ENCODE measurements at regions of chr5 and their contacts with region 1.

Region 1: GRCh38 chr5:82225525-82226172 is 52.5 kb downstream of the RPS23 start:
- DNase-seq: peak; percentile 39 to 81
- ATAC-seq: peak; percentile 71 to 90 (median 90)
- H3K4me3 ChIP-seq: no peak overlapping the region
- H3K4me3 Mint-ChIP-seq: no peak overlapping the region
- H3K27ac ChIP-seq: no peak overlapping the region
- H3K27ac Mint-ChIP-seq: no peak overlapping the region
- H3K4me1 ChIP-seq: peaks cover 4% of the 10 kb centered on the region
- H3K4me1 Mint-ChIP-seq: peaks cover 5 to 10% of the 10 kb centered on the region in 2 donors
- H3K27me3 ChIP-seq: no peaks in the 10 kb centered on the region
- H3K27me3 Mint-ChIP-seq: no peaks in the 10 kb centered on the region
- CTCF ChIP-seq: peak; percentile 89

Region 2: GRCh38 chr5:82174128-82174918 is 51.3 kb before region 1 on chr5:
- intact Hi-C with region 1: loop called (anchors 1 kb)
- DNase-seq: peak; percentile 44 to 67
- ATAC-seq: peak; percentile 58 to 87 (median 86)
- H3K4me3 ChIP-seq: no peak overlapping the region
- H3K4me3 Mint-ChIP-seq: no peak overlapping the region
- H3K27ac ChIP-seq: no peak overlapping the region
- H3K27ac Mint-ChIP-seq: peak overlapping the region in 1 of 2 donors; percentile 75
- H3K4me1 ChIP-seq: peaks cover 2% of the 10 kb centered on the region
- H3K4me1 Mint-ChIP-seq: peaks cover 5 to 11% of the 10 kb centered on the region in 2 donors
- H3K27me3 ChIP-seq: no peaks in the 10 kb centered on the region
- H3K27me3 Mint-ChIP-seq: no peaks in the 10 kb centered on the region
- CTCF ChIP-seq: peak; percentile 72

Region 3: DNA sequence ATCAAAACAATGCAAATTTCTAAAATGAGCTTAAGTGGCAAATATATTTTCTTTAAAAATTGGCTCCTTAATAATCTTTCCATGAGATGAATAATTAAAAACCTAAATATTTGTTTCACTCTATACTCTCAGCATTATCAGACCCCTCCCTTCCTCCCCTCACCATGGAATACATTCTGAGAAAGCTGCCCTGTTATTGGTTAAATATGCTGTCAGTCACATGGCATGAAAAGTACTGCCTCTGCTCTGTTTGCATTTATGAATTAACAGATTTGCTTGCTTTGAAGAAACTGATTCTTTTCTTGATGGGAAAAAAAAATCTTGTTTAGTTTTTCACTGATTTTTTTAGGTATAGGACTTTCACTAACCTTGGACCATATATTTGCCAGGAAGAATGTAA is 69.5 kb after region 1 on chr5:
- intact Hi-C with region 1: no loop called
- DNase-seq: no peak
- ATAC-seq: no peak
- H3K4me3 ChIP-seq: no peak overlapping the region
- H3K4me3 Mint-ChIP-seq: no peak overlapping the region
- H3K27ac ChIP-seq: no peak overlapping the region
- H3K27ac Mint-ChIP-seq: no peak overlapping the region
- H3K4me1 ChIP-seq: no peaks in the 10 kb centered on the region
- H3K4me1 Mint-ChIP-seq: no peaks in the 10 kb centered on the region
- H3K27me3 ChIP-seq: no peaks in the 10 kb centered on the region
- H3K27me3 Mint-ChIP-seq: no peaks in the 10 kb centered on the region
- CTCF ChIP-seq: no peak

Measured in natural killer cell (primary cell).